BJ (cell line): ENCODE measurements at regions of chr17 and their contacts with region 1.

Region 1: GRCh38 chr17:76726231-76726775 is at the start of gene JMJD6:
- DNase-seq: peak; percentile 81
- H3K4me3 ChIP-seq: peak within 1 kb of the TSS; percentile 93
- H3K27me3 ChIP-seq: no peaks in the 10 kb centered on the region
- CTCF ChIP-seq: no peak
- polyA plus RNA-seq, gene JMJD6: 12.5 and 17.2 TPM in 2 replicates

Region 2: DNA sequence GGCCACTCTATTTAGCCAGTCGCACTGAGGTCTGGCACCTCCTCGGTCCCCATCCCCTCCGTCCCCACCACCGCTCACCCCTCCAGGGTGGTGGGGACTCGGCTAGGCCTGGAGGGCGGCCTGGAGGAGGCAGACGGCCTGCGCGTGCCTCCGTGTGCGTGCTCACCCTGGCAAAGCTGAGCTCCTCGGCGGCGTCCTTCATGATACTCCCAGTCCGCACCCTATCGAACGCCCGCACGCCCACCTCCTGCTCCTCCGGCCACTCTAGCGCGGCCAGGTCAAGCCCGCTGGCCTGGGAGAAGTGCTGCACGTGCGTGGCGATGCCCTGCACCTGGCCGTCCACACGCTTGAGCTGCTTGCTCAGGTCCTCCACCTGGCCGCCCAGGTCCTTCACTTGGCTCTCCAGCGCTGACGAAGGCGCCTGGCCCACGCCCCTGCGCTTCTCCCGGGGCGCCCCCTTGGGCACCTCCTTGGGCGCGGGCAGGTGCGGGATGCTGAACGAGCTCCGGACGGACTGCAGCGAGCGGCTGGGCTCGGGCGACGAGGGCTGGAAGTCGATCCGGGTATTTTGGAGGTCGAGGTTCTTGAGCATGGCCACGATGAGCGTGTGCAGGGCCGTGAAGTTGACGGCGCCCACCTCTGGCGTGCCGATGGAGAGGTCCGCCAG is 418.9 kb before region 1 on chr17:
- CTCF ChIA-PET with region 1: no interaction called
- POLR2A ChIA-PET with region 1: no interaction called
- DNase-seq: no peak
- H3K4me3 ChIP-seq: no peak overlapping the region
- H3K27me3 ChIP-seq: no peaks in the 10 kb centered on the region
- CTCF ChIP-seq: no peak

Region 3: GRCh38 chr17:76714822-76715495 is 11.3 kb before region 1 on chr17:
- CTCF ChIA-PET with region 1: interaction called, 25 read pairs
- POLR2A ChIA-PET with region 1: interaction called, 17 read pairs
- DNase-seq: no peak
- H3K4me3 ChIP-seq: no peak overlapping the region
- H3K27me3 ChIP-seq: no peaks in the 10 kb centered on the region
- CTCF ChIP-seq: peak; percentile 81